MCF 10A (cell line): ENCODE measurements at regions of chr4 and their contacts with region 1.

Region 1: DNA sequence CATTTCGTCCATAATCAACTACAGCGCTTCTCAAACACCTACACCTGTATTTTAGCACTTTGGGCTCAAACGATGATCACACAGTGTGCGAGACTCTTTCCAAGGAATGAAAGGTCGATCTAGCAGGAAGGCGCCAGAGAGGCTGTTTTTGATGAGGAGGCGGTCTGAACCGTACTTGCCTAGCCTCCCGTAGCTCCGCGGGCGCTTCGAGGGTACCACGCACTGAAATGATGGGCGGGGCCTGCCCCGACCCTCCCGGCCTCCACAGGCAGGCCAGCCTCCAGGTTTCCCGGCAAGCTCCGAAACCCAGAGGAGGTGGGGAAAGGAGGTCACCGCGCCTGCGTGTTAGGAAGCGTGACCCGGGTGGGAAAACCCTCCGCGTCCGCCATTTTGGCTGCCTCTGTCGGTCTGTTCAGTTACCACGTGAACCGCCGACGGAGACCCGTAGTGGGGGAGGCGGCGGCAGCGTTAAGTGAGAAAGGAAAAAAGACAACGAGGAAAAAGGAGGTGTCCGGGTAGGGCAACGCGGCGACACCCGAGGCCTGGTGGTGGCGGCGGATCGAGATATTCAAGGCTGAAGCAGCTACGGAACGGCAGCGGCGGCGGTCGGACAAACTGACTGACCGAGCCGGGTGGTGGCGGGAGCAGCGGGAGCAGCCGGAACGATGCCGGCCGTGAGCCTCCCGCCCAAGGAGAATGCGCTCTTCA is at the start of gene NAA15:
- DNase-seq: peak; percentile 98
- H3K4me3 Mint-ChIP-seq: peak within 1 kb of the TSS; percentile 87
- H3K27ac Mint-ChIP-seq: peak within 1 kb of the TSS; percentile 98
- H3K4me1 Mint-ChIP-seq: peaks cover 7% of the 10 kb centered on the region
- H3K27me3 Mint-ChIP-seq: no peaks in the 10 kb centered on the region
- CTCF ChIP-seq: no peak
- total RNA-seq, gene NAA15: 54.9 and 80.6 TPM in 2 replicates

Region 2: DNA sequence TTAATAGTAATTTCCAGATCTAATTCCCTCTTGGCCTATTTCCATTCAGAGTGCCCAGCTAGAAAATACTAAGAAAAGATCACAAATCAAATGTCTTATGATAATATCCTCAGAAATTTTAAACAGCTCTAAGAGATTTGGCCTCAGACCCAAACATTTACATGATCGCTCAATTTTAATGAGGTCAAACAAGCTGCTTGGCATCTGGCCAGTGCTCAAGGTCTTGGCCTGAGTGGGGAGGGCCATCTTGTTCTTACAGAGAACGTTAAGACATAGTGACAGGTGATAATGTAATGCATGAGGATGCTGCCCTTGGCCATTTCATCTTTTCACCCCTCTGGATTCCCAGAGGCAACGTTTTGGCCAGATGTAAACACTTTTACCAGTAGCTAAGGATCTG is 899.9 kb before region 1 on chr4:
- CTCF ChIA-PET with region 1: no interaction called
- POLR2A ChIA-PET with region 1: no interaction called
- intact Hi-C with region 1: no loop called
- DNase-seq: peak; percentile 9
- H3K4me3 Mint-ChIP-seq: no peak overlapping the region
- H3K27ac Mint-ChIP-seq: no peak overlapping the region
- H3K4me1 Mint-ChIP-seq: peaks cover 18% of the 10 kb centered on the region
- H3K27me3 Mint-ChIP-seq: no peaks in the 10 kb centered on the region
- CTCF ChIP-seq: no peak

Region 3: DNA sequence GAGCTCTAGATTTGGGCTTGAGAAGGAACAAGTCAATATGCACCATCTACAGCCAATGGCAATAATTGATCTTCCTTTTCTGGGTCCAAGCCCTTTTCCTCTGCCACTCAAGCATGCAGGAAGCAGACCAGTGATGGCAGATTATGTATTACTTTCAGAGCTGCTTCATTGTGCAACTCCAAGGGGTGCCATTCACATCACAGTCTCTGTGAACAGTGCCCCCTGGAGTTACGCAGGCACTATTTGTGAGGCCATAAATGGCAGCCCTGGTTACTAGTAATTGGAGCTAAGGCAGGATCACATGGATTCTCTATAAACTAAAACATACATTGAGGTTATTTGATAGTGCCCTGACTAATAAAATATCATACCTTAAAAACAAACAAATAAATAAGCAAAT is 745.7 kb before region 1 on chr4:
- CTCF ChIA-PET with region 1: no interaction called
- POLR2A ChIA-PET with region 1: no interaction called
- intact Hi-C with region 1: no loop called
- DNase-seq: peak; percentile 33
- H3K4me3 Mint-ChIP-seq: no peak overlapping the region
- H3K27ac Mint-ChIP-seq: no peak overlapping the region
- H3K4me1 Mint-ChIP-seq: no peaks in the 10 kb centered on the region
- H3K27me3 Mint-ChIP-seq: no peaks in the 10 kb centered on the region
- CTCF ChIP-seq: peak; percentile 16

Region 4: DNA sequence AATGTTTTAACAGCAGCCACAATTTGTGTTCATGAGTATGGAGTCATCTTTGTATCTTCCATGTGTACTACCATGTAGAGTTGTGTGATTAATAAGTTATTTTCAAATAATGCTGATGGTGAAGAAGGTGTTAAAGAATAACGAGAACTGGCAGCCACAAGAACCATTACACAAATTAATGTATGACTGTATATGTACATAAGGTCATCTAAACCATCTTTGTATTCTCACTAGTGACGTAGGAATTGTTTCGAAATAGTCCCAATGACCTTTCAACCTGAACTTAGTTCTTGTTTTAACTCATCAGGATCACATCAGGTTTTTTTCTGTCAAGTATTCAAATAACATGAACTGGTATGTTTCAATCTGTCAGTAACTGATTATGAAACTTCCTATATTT is 334.0 kb before region 1 on chr4:
- CTCF ChIA-PET with region 1: no interaction called
- POLR2A ChIA-PET with region 1: no interaction called
- intact Hi-C with region 1: no loop called
- DNase-seq: peak; percentile 37
- H3K4me3 Mint-ChIP-seq: no peak overlapping the region
- H3K27ac Mint-ChIP-seq: no peak overlapping the region
- H3K4me1 Mint-ChIP-seq: no peaks in the 10 kb centered on the region
- H3K27me3 Mint-ChIP-seq: no peaks in the 10 kb centered on the region
- CTCF ChIP-seq: no peak

Region 5: GRCh38 chr4:139083956-139084803 is 217.1 kb before region 1 on chr4:
- CTCF ChIA-PET with region 1: no interaction called
- POLR2A ChIA-PET with region 1: interaction called, 92 read pairs
- intact Hi-C with region 1: loop called (anchors 5 kb)
- DNase-seq: peak; percentile 91
- H3K4me3 Mint-ChIP-seq: peak overlapping the region; percentile 97
- H3K27ac Mint-ChIP-seq: peak overlapping the region; percentile 95
- H3K4me1 Mint-ChIP-seq: peaks cover 15% of the 10 kb centered on the region
- H3K27me3 Mint-ChIP-seq: no peaks in the 10 kb centered on the region
- CTCF ChIP-seq: no peak

Region 6: DNA sequence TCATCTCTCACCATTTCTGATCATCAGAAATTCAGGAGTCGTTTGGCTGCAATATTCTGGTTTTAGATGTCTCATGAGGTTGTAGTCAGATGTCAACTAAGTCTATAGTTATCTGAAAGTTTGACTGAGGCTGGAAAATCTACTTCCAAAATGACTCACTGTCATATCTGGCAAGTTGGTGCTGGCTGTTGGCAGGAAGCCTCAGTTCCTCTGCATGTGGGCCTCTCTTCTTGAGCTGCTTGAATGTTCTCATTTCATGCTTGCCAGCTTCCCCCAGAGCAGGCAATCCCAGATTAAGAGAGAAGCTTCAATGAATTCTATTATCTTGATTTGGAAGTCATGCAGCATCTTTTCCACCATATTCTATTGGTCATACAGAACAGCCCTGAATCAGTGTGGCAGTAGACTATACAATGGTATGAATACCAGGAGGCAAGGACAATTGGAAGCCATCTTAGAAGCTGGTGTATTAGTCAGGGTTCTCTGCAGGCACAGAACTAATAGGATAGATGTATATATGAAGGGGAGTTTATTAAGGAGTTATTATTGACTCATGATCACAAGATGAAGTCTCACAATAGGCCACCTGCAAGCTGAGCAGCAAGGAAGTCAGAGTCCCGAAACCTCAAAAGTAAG is 77.5 kb before region 1 on chr4:
- CTCF ChIA-PET with region 1: interaction called, 57 read pairs
- POLR2A ChIA-PET with region 1: interaction called, 19 read pairs
- intact Hi-C with region 1: no loop called
- DNase-seq: peak; percentile 65
- H3K4me3 Mint-ChIP-seq: no peak overlapping the region
- H3K27ac Mint-ChIP-seq: no peak overlapping the region
- H3K4me1 Mint-ChIP-seq: peaks cover 7% of the 10 kb centered on the region
- H3K27me3 Mint-ChIP-seq: no peaks in the 10 kb centered on the region
- CTCF ChIP-seq: no peak

Region 7: GRCh38 chr4:139243448-139244365 is 57.6 kb before region 1 on chr4:
- CTCF ChIA-PET with region 1: interaction called, 45 read pairs
- POLR2A ChIA-PET with region 1: interaction called, 91 read pairs
- intact Hi-C with region 1: no loop called
- DNase-seq: peak; percentile 98
- H3K4me3 Mint-ChIP-seq: no peak overlapping the region
- H3K27ac Mint-ChIP-seq: peak overlapping the region; percentile 93
- H3K4me1 Mint-ChIP-seq: peaks cover 27% of the 10 kb centered on the region
- H3K27me3 Mint-ChIP-seq: no peaks in the 10 kb centered on the region
- CTCF ChIP-seq: no peak

Region 8: GRCh38 chr4:139315221-139315675 is 14.0 kb after region 1 on chr4:
- CTCF ChIA-PET with region 1: interaction called, 5 read pairs
- POLR2A ChIA-PET with region 1: interaction called, 56 read pairs
- intact Hi-C with region 1: no loop called
- DNase-seq: no peak
- H3K4me3 Mint-ChIP-seq: no peak overlapping the region
- H3K27ac Mint-ChIP-seq: peak overlapping the region; percentile 87
- H3K4me1 Mint-ChIP-seq: peaks cover 40% of the 10 kb centered on the region
- H3K27me3 Mint-ChIP-seq: no peaks in the 10 kb centered on the region
- CTCF ChIP-seq: no peak

Region 9: GRCh38 chr4:139367421-139368090 is 66.3 kb after region 1 on chr4:
- CTCF ChIA-PET with region 1: no interaction called
- POLR2A ChIA-PET with region 1: interaction called, 11 read pairs
- intact Hi-C with region 1: no loop called
- DNase-seq: peak; percentile 3
- H3K4me3 Mint-ChIP-seq: no peak overlapping the region
- H3K27ac Mint-ChIP-seq: peak overlapping the region; percentile 69
- H3K4me1 Mint-ChIP-seq: peaks cover 10% of the 10 kb centered on the region
- H3K27me3 Mint-ChIP-seq: no peaks in the 10 kb centered on the region
- CTCF ChIP-seq: no peak

Region 10: GRCh38 chr4:139554893-139555704 is 253.8 kb after region 1 on chr4:
- CTCF ChIA-PET with region 1: no interaction called
- POLR2A ChIA-PET with region 1: interaction called, 20 read pairs
- intact Hi-C with region 1: no loop called
- DNase-seq: peak; percentile 89
- H3K4me3 Mint-ChIP-seq: peak overlapping the region; percentile 82
- H3K27ac Mint-ChIP-seq: peak overlapping the region; percentile 73
- H3K4me1 Mint-ChIP-seq: peaks cover 25% of the 10 kb centered on the region
- H3K27me3 Mint-ChIP-seq: no peaks in the 10 kb centered on the region
- CTCF ChIP-seq: no peak